ENCODE measurements at regions of chr2 and their contacts with region 1.

Region 1: DNA sequence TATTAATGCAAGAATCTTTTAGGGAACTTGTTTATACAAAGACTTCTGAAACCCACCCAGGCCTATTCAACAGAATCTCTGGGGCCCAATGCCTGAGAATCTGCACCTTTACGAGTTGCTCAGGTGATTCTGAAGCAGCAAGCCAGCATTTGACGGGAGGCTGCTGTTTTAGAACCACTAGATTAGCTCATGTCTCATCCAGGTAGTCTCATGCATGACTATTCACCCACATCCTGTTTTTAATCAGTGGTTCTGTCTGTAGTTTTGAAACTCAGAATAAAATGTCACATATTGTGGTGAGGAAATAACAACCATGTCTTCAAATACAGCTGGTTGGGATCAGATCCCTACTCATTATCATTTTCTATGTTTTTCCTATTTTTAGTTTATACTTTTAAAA is 39.5 kb downstream of the CYTIP start:
- DNase-seq: peak; percentile 61
- H3K4me3 Mint-ChIP-seq: no peak overlapping the region
- H3K27ac Mint-ChIP-seq: peak overlapping the region; percentile 44
- H3K4me1 Mint-ChIP-seq: peaks cover 55% of the 10 kb centered on the region
- H3K27me3 Mint-ChIP-seq: no peaks in the 10 kb centered on the region

Region 2: GRCh38 chr2:157460384-157460837 is 56.0 kb after region 1 on chr2:
- intact Hi-C with region 1: no loop called
- DNase-seq: no peak
- H3K4me3 Mint-ChIP-seq: peak overlapping the region; percentile 51
- H3K27ac Mint-ChIP-seq: peak overlapping the region; percentile 54
- H3K4me1 Mint-ChIP-seq: peaks cover 92% of the 10 kb centered on the region
- H3K27me3 Mint-ChIP-seq: no peaks in the 10 kb centered on the region

Region 3: DNA sequence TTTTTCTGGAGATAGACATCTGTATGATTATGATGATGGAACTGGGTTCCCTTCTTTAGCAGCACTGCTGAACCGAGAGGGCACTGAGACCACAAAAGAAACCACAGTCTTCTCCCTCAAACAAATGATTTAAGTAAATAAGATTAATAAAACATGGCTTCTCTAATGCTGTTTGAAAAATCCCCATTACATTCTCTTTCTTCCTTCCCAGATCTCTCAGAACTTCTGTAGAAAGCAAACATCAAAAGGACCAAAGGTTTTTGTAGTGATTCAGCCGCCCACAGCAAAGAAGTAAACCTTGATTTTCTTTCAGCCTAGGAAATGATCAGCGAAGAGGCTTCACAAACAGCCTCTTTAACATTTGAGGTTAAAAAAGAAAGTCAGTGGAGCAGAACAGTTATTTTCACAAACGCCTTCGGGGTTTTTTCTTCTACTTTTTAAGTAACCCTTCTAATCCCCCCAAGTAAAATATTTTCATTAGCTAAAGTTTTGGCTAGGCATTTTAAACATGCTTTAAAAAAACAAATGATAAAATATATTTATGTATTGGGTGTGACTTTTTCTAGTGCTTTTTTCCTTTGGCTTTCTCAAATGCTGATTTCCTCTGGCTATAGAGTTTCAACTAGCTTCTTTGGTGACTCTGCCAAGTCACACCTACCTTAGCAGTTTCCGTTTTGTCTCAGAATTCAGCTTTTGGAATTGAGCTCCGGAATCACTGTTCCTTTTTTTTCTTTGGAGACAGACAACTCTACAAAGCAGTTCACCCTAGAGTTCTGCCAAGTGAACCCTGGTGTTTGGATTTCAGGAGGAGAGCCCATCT is 786.9 kb after region 1 on chr2:
- intact Hi-C with region 1: loop called (anchors 5 kb)
- DNase-seq: no peak
- H3K4me3 Mint-ChIP-seq: no peak overlapping the region
- H3K27ac Mint-ChIP-seq: peak overlapping the region; percentile 29
- H3K4me1 Mint-ChIP-seq: peaks cover 31% of the 10 kb centered on the region
- H3K27me3 Mint-ChIP-seq: peaks cover 27% of the 10 kb centered on the region

Measured in activated T-helper 2 cell treated with anti-CD3 and anti-CD28 coated beads, Interferon-gamma antibody, Interleukin-2, Interleukin-4, amounts not matched to agents 10 μg/mL and 5 μg/mL and 100 μg/mL, durations not matched to agents 14 hours and 24 hours and 36 hours (primary cell).